Calu3 (cell line): ENCODE measurements at regions of chr13 and their contacts with region 1.

Region 1: GRCh38 chr13:79767126-79767525 is 286.2 kb downstream of the NDFIP2 start:
- DNase-seq: no peak
- H3K4me3 Mint-ChIP-seq: no peak overlapping the region
- H3K27ac Mint-ChIP-seq: no peak overlapping the region
- H3K4me1 Mint-ChIP-seq: no peaks in the 10 kb centered on the region
- H3K27me3 Mint-ChIP-seq: no peaks in the 10 kb centered on the region
- CTCF ChIP-seq: no peak

Region 2: GRCh38 chr13:79393564-79394249 is 373.4 kb before region 1 on chr13:
- CTCF ChIA-PET with region 1: no interaction called
- intact Hi-C with region 1: no loop called
- DNase-seq: no peak
- H3K4me3 Mint-ChIP-seq: peak overlapping the region; percentile 52
- H3K27ac Mint-ChIP-seq: peak overlapping the region; percentile 8
- H3K4me1 Mint-ChIP-seq: peaks cover 17% of the 10 kb centered on the region
- H3K27me3 Mint-ChIP-seq: no peaks in the 10 kb centered on the region
- CTCF ChIP-seq: no peak

Region 3: DNA sequence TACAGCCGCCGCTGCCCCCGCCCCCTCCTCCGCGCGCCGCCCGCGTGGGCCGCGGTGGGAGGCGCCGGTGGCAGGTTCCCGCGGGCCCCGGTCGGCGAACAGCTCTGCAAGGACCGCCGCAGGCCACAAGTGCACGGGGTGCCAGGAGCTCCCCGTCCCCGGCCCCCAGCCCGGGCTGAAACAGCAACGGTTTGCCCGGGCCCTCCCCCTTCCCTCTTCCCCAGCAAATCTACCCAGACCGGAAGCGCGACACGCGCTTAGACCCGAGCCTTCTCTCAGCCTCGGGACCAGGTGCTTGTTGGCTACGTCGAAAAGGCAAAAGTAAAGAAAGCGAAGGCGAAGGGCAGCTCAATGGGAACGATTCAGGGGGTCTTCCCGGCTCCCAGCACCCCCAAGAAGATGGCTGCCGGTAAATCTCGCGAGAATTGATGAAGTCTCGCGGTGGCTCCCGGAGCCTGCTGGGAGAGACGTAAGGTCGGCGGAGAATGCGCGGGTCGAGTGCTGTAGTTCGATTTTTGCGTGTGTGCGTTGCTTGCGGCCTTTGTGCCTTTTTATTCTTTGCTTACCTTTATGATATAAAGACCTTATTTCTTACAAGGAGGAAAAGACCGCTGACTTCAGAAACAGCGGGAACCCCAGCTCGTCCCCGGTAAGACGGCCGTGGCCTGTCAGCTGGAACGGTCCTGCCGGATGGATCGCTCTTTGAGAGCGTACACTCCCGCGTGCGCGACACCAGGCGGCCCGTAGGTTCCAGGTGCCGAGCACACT is 361.1 kb before region 1 on chr13 and contains the start of gene RBM26:
- CTCF ChIA-PET with region 1: no interaction called
- intact Hi-C with region 1: no loop called
- DNase-seq: peak; percentile 77
- H3K4me3 Mint-ChIP-seq: no peak within 1 kb of the TSS
- H3K27ac Mint-ChIP-seq: no peak within 1 kb of the TSS
- H3K4me1 Mint-ChIP-seq: peaks cover 23% of the 10 kb centered on the region
- H3K27me3 Mint-ChIP-seq: no peaks in the 10 kb centered on the region
- CTCF ChIP-seq: no peak
- total RNA-seq, gene RBM26: 18.9 and 19.2 TPM in 2 replicates

Region 4: DNA sequence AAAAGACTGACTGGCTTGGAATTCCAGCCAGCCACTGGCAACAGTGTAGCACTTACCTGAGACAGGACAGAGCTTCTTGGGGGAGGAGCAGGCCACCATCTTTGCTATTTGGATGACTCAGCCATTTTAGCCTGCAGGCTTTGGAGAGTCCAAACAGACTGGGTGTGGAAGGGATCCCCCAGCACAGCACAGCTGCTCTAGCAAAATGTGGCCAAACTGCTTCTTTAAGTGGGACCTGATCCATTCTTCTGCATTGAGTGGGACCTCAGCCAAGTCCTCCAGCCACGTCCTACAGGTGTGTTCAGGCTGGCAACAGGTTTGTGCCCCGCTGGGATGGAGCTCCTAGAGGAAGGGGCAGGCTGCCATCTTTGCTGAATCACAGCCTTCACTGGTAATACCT is 206.2 kb before region 1 on chr13:
- CTCF ChIA-PET with region 1: no interaction called
- intact Hi-C with region 1: no loop called
- DNase-seq: no peak
- H3K4me3 Mint-ChIP-seq: no peak overlapping the region
- H3K27ac Mint-ChIP-seq: no peak overlapping the region
- H3K4me1 Mint-ChIP-seq: no peaks in the 10 kb centered on the region
- H3K27me3 Mint-ChIP-seq: no peaks in the 10 kb centered on the region
- CTCF ChIP-seq: no peak

Region 5: GRCh38 chr13:79679334-79679733 is 87.8 kb before region 1 on chr13:
- CTCF ChIA-PET with region 1: no interaction called
- intact Hi-C with region 1: loop called (anchors 2 kb)
- DNase-seq: peak; percentile 48
- H3K4me3 Mint-ChIP-seq: no peak overlapping the region
- H3K27ac Mint-ChIP-seq: no peak overlapping the region
- H3K4me1 Mint-ChIP-seq: peaks cover 18% of the 10 kb centered on the region
- H3K27me3 Mint-ChIP-seq: no peaks in the 10 kb centered on the region
- CTCF ChIP-seq: peak; percentile 29

Region 6: DNA sequence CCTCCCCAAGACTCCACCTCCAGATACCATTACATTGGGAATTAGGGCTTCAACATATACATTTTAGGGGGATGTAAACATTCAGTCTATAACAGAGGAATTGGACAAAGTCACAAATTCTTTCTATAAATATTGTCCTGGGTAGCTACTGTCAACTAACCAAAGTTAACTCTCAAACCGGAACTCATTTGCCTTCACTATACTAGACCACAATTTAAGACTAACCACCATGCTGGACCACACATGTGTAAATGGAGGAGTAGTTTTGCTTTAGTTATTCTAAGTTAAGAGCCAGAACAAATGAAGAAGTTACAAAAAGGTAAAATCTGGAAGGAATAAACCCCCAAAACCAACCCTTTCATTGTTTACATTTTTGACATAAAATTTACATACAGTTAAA is 63.4 kb before region 1 on chr13:
- CTCF ChIA-PET with region 1: no interaction called
- intact Hi-C with region 1: no loop called
- DNase-seq: no peak
- H3K4me3 Mint-ChIP-seq: no peak overlapping the region
- H3K27ac Mint-ChIP-seq: no peak overlapping the region
- H3K4me1 Mint-ChIP-seq: no peaks in the 10 kb centered on the region
- H3K27me3 Mint-ChIP-seq: no peaks in the 10 kb centered on the region
- CTCF ChIP-seq: no peak